K562 (cell line): ENCODE measurements at regions of chr3 and their contacts with region 1.

Region 1: GRCh38 chr3:183099026-183099837 is at the start of gene MCCC1:
- DNase-seq: peak; percentile 98 to 99 (median 98)
- ATAC-seq: peak; percentile 100
- H3K4me3 ChIP-seq: peak within 1 kb of the TSS; percentile 83
- H3K27ac ChIP-seq: peak within 1 kb of the TSS; percentile 75
- H3K4me1 ChIP-seq: peaks cover 5 to 13% of the 10 kb centered on the region in 2 experiments; a peak in 4 of 5 replicates
- H3K27me3 ChIP-seq: no peaks in the 10 kb centered on the region
- CTCF ChIP-seq: no peak
- EP300 ChIP-seq: peak; percentile 30; the same call in 1 of the 2 replicates
- POLR2A ChIP-seq: peak; percentile 89
- RAD21 ChIP-seq: 0 out of 4 replicates have a peak, but pooled peaks of 1 of the 2 experiments have one; percentile 4
- polyA plus RNA-seq, gene MCCC1: 13.7 to 14.3 TPM

Region 2: GRCh38 chr3:182792901-182793662 is 306.1 kb before region 1 on chr3 and contains the start of gene ATP11B:
- CTCF ChIA-PET with region 1: no interaction called
- POLR2A ChIA-PET with region 1: no interaction called
- in situ Hi-C with region 1: no loop called
- intact Hi-C with region 1: loop called (anchors 10 kb)
- DNase-seq: peak; percentile 92 to 96 (median 96)
- ATAC-seq: peak; percentile 83
- H3K4me3 ChIP-seq: peak within 1 kb of the TSS; percentile 82
- H3K27ac ChIP-seq: peak within 1 kb of the TSS; percentile 97
- H3K4me1 ChIP-seq: peaks cover 7 to 16% of the 10 kb centered on the region in 2 experiments; a peak in 3 of 5 replicates
- H3K27me3 ChIP-seq: no peaks in the 10 kb centered on the region
- CTCF ChIP-seq: no peak
- EP300 ChIP-seq: no peak
- POLR2A ChIP-seq: peak; percentile 91
- RAD21 ChIP-seq: 0 out of 4 replicates have a peak, but pooled peaks of 1 of the 2 experiments have one; percentile 6
- polyA plus RNA-seq, gene ATP11B: 11.9 to 12.1 TPM

Region 3: GRCh38 chr3:183085634-183086390 is 13.4 kb before region 1 on chr3:
- CTCF ChIA-PET with region 1: no interaction called
- POLR2A ChIA-PET with region 1: interaction called, 12 read pairs
- in situ Hi-C with region 1: no loop called
- intact Hi-C with region 1: no loop called
- DNase-seq: peak; percentile 61 to 76 (median 62)
- ATAC-seq: peak; percentile 95
- H3K4me3 ChIP-seq: no peak overlapping the region
- H3K27ac ChIP-seq: 0 out of 3 replicates have a peak overlapping the region, but pooled peaks have one; percentile 11
- H3K4me1 ChIP-seq: no peaks in the 10 kb centered on the region
- H3K27me3 ChIP-seq: no peaks in the 10 kb centered on the region
- CTCF ChIP-seq: peak; percentile 63 to 79 (median 66)
- EP300 ChIP-seq: no peak
- POLR2A ChIP-seq: no peak
- RAD21 ChIP-seq: peak in 1 of 2 experiments; percentile 44; a peak in 2 of 4 replicates

Region 4: DNA sequence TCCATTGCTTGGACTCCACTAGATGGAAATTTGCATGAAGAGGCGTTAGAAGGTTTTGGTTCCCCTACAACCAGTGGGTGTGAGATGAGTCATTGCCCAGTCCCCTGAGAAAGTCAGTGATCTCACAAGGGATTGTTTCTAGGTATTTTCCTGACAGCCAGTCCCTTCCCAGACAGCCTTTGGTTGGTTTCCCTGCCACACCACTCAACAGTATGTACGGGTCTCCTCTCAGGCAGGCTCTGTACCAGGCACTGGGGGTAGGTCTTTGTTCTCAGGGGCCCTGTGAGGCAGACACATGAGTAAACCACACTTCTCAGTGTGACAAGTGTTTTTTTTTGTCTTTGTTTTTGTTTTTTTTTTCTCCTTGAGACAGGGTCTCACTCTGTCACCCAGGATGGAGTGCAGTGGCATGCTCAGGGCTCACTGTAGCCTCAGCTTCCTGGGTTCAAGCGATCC is 59.3 kb after region 1 on chr3:
- CTCF ChIA-PET with region 1: no interaction called
- POLR2A ChIA-PET with region 1: no interaction called
- in situ Hi-C with region 1: no loop called
- intact Hi-C with region 1: no loop called
- DNase-seq: peak; percentile 23 to 61 (median 42)
- ATAC-seq: no peak
- H3K4me3 ChIP-seq: no peak overlapping the region
- H3K27ac ChIP-seq: no peak overlapping the region; the same call in 2 of the 3 replicates
- H3K4me1 ChIP-seq: peaks cover 0 to 11% of the 10 kb centered on the region in 2 experiments; a peak in 3 of 5 replicates
- H3K27me3 ChIP-seq: peaks cover 0 to 2% of the 10 kb centered on the region in 2 experiments; a peak in 2 of 5 replicates
- CTCF ChIP-seq: no peak
- EP300 ChIP-seq: no peak
- POLR2A ChIP-seq: no peak
- RAD21 ChIP-seq: no peak